Naive thymus-derived CD4-positive, alpha-beta T cell (primary cell): ENCODE measurements at regions of chr4 and their contacts with region 1.

Region 1: DNA sequence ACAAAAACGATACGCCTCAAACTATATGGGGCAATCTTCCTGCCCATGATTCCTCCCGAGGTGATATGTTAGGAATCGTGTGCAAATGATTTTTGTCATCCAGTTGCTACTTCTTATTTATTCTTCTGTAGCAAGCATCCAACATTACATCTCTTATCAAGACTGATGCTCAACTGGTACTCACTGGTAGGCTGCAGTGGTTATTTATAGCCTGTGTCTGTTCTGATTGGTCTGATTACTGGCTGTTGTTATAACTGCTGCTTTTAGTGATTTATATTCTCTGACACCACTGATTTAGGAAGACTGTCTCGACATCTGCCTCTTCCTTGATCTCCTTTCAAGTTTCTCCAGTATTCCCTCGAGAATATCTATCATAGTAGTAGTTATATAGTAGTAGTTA is 165.8 kb downstream of the LARP7 start:
- DNase-seq: no peak
- ATAC-seq: no peak
- H3K4me3 ChIP-seq: no peak overlapping the region
- H3K4me3 Mint-ChIP-seq: no peak overlapping the region
- H3K27ac ChIP-seq: no peak overlapping the region
- H3K27ac Mint-ChIP-seq: no peak overlapping the region
- H3K4me1 ChIP-seq: no peaks in the 10 kb centered on the region
- H3K4me1 Mint-ChIP-seq: no peaks in the 10 kb centered on the region
- H3K27me3 ChIP-seq: no peaks in the 10 kb centered on the region
- H3K27me3 Mint-ChIP-seq: peaks cover 5 to 23% (median 19%) of the 10 kb centered on the region in 5 donors

Region 2: GRCh38 chr4:112636688-112637551 is 165.9 kb before region 1 on chr4 and contains the starts of genes LARP7 and ZGRF1:
- CTCF ChIA-PET with region 1: no interaction called
- POLR2A ChIA-PET with region 1: no interaction called
- intact Hi-C with region 1: no loop called
- DNase-seq: peak; percentile 91 to 99 (median 99)
- ATAC-seq: peak; percentile 91
- H3K4me3 ChIP-seq: peak within 1 kb of the TSS; percentile 98
- H3K4me3 Mint-ChIP-seq: peak within 1 kb of the TSS in 2 of 10 donors; percentile 26 to 46
- H3K27ac ChIP-seq: peak within 1 kb of the TSS; percentile 88
- H3K27ac Mint-ChIP-seq: peak within 1 kb of the TSS in 1 of 9 donors; percentile 66
- H3K4me1 ChIP-seq: peaks cover 9 to 17% of the 10 kb centered on the region in 2 donors
- H3K4me1 Mint-ChIP-seq: peaks cover 19 to 29% (median 21%) of the 10 kb centered on the region in 7 donors
- H3K27me3 ChIP-seq: no peaks in the 10 kb centered on the region
- H3K27me3 Mint-ChIP-seq: no peaks in the 10 kb centered on the region
- total RNA-seq, gene LARP7: 28.6 to 48.2 (median 47.7) TPM
- total RNA-seq, gene ZGRF1: 8.1 to 29.8 (median 10.5) TPM

Region 3: GRCh38 chr4:112751447-112751846 is 51.3 kb before region 1 on chr4:
- CTCF ChIA-PET with region 1: no interaction called
- POLR2A ChIA-PET with region 1: no interaction called
- intact Hi-C with region 1: no loop called
- DNase-seq: no peak
- ATAC-seq: no peak
- H3K4me3 ChIP-seq: no peak overlapping the region
- H3K4me3 Mint-ChIP-seq: no peak overlapping the region
- H3K27ac ChIP-seq: no peak overlapping the region
- H3K27ac Mint-ChIP-seq: no peak overlapping the region
- H3K4me1 ChIP-seq: no peaks in the 10 kb centered on the region
- H3K4me1 Mint-ChIP-seq: peaks cover 0 to 3% (median 0%) of the 10 kb centered on the region in 7 donors
- H3K27me3 ChIP-seq: no peaks in the 10 kb centered on the region
- H3K27me3 Mint-ChIP-seq: peaks cover 0 to 25% (median 10%) of the 10 kb centered on the region in 5 donors

Region 4: DNA sequence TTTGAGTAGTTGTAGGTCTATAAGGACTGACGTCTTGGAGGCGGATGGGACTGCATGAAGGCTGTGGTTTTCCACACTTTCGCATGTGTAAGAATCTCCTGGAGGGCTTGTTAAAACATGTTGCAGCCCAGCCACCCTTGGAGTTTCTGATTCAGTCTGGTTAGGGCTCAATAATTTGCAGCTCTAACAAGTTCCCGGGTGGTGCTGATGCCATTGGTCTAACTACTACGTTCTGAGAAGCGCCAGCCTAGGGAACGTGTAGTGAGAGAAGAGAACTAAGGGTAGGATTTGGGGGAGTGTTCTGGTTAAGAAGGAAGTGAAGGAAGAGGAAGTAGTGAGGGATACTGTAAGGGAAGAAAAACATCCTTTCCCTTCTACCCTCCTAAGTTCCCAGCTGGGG is 27.0 kb before region 1 on chr4:
- CTCF ChIA-PET with region 1: no interaction called
- POLR2A ChIA-PET with region 1: no interaction called
- intact Hi-C with region 1: loop called in 1 of 2 experiments (anchors 1 kb)
- DNase-seq: no peak
- ATAC-seq: no peak
- H3K4me3 ChIP-seq: no peak overlapping the region
- H3K4me3 Mint-ChIP-seq: no peak overlapping the region
- H3K27ac ChIP-seq: no peak overlapping the region
- H3K27ac Mint-ChIP-seq: no peak overlapping the region
- H3K4me1 ChIP-seq: no peaks in the 10 kb centered on the region
- H3K4me1 Mint-ChIP-seq: no peaks in the 10 kb centered on the region
- H3K27me3 ChIP-seq: no peaks in the 10 kb centered on the region
- H3K27me3 Mint-ChIP-seq: peaks cover 0 to 7% (median 0%) of the 10 kb centered on the region in 5 donors

Region 5: GRCh38 chr4:112817933-112818593 is 15.3 kb after region 1 on chr4:
- CTCF ChIA-PET with region 1: no interaction called
- POLR2A ChIA-PET with region 1: no interaction called
- intact Hi-C with region 1: no loop called
- DNase-seq: peak in 1 of 9 donors; percentile 55
- ATAC-seq: peak; percentile 56
- H3K4me3 ChIP-seq: no peak overlapping the region
- H3K4me3 Mint-ChIP-seq: peak overlapping the region in 9 of 10 donors; percentile 4 to 84 (median 29)
- H3K27ac ChIP-seq: no peak overlapping the region
- H3K27ac Mint-ChIP-seq: peak overlapping the region in 1 of 9 donors; percentile 85
- H3K4me1 ChIP-seq: no peaks in the 10 kb centered on the region
- H3K4me1 Mint-ChIP-seq: peaks cover 7 to 22% (median 9%) of the 10 kb centered on the region in 7 donors
- H3K27me3 ChIP-seq: no peaks in the 10 kb centered on the region
- H3K27me3 Mint-ChIP-seq: peaks cover 6 to 35% (median 29%) of the 10 kb centered on the region in 5 donors